ENCODE measurements at regions of chr3 and their contacts with region 1.

Region 1: DNA sequence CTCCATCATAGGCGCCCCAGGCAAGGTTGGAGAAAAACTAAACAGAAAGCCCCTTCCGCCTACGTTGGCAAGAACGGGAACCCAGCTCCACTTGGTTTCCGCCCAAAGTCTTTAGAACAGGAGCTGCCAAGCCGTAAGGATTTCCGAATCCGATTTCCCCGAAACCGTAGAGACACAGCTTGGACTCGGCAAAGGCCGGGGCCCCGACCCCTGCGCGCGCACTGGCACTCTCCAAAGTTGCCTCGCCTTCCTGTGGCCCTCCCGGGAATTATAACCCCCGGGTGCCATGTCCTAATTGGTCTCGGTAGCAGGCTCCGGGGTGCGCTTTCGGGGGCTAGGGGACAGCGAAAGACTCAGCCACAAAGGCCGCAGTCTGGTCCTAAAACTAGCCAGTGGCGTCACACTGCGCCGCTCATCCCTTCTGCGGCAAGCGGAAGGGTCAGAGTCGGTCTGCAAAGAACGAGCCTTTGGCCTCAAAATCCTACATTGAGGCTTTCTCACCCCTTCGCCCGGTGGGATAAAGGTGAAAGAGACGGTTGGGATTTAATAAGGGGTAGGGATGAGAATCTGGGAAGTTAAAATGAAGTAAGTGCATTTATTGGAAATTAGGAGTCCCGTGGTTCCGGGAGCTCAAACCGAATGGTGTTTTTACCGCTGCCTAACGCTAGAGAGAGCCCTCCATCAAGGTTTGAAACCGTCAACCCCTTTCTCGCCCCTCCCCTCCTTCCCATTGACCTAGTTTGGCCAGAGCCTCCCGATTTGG is 6.8 kb downstream of the BCL6 start:
- DNase-seq: peak; percentile 81
- CTCF ChIP-seq: peak; percentile 71

Region 2: DNA sequence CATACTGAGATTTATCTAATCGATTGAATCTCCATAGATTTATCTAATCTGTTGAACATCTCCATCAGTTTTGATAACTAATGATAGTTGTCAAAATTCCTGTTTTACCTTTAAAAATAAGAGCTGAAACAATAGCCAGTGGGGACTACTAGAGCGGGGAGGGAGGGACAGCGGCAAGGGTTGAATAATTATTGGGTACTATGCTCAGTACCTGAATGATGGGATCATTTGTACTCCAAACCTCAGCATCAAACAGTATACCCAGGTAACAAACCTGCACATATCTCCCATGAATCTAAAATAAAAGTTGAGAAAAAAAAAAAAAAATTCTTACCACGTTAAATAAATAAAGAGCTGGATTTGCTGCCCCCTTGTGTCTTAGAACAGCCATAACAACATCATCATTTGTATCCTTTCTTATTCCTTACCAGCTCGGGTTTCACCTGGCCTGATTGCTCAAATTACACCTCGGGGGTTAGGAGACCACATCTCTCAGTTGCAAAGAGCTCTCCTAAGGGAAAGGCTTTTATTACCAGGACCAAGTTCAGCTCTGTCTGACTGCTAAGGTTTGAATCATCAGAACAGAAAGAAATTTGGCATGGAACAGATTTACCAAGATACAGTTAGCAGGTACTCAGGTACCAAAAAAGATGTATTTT is 573.5 kb before region 1 on chr3:
- CTCF ChIA-PET with region 1: no interaction called
- POLR2A ChIA-PET with region 1: no interaction called
- DNase-seq: peak; percentile 51
- CTCF ChIP-seq: peak; percentile 47

Region 3: GRCh38 chr3:187669675-187670504 is 68.6 kb before region 1 on chr3 and contains the start of gene SST:
- CTCF ChIA-PET with region 1: no interaction called
- POLR2A ChIA-PET with region 1: no interaction called
- DNase-seq: no peak
- CTCF ChIP-seq: no peak

Region 4: GRCh38 chr3:187694801-187695200 is 43.7 kb before region 1 on chr3:
- CTCF ChIA-PET with region 1: no interaction called
- POLR2A ChIA-PET with region 1: no interaction called
- DNase-seq: no peak
- CTCF ChIP-seq: no peak

Region 5: DNA sequence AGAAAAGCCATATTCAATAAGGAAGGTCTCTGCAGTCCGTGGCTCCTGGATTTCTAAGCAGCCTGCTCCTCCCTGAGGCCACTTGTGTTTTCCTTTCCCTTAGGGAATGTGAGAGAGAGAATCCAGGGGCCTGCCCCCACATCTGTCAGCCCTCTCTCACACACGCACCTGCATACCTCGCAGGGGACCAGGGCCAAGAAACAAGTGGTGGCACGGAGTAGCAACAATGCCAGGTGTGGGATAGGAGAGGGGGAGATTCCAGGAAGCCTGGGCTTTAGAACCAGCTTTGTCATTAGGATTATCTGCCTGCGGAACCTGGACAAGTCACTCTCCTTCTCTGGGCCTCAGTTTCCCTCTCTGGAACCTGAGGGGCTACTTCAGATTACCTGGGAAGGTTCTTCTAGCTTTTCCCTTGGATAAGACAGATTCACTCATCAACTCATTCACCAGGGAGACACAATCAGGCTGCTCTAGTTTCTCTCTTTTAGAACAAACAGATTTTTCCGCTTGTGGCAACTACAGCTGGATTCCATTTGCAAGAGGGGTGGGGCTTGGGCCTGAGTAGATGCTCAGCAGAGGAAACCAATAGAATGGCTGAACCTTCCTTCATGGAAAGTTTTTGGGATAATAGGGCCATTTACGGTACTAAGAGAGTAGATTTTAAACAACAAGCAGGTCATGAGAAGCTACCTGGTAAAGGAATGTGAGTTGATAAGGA is 12.7 kb before region 1 on chr3:
- CTCF ChIA-PET with region 1: interaction called, 42 read pairs
- POLR2A ChIA-PET with region 1: no interaction called
- DNase-seq: no peak
- CTCF ChIP-seq: no peak

Region 6: DNA sequence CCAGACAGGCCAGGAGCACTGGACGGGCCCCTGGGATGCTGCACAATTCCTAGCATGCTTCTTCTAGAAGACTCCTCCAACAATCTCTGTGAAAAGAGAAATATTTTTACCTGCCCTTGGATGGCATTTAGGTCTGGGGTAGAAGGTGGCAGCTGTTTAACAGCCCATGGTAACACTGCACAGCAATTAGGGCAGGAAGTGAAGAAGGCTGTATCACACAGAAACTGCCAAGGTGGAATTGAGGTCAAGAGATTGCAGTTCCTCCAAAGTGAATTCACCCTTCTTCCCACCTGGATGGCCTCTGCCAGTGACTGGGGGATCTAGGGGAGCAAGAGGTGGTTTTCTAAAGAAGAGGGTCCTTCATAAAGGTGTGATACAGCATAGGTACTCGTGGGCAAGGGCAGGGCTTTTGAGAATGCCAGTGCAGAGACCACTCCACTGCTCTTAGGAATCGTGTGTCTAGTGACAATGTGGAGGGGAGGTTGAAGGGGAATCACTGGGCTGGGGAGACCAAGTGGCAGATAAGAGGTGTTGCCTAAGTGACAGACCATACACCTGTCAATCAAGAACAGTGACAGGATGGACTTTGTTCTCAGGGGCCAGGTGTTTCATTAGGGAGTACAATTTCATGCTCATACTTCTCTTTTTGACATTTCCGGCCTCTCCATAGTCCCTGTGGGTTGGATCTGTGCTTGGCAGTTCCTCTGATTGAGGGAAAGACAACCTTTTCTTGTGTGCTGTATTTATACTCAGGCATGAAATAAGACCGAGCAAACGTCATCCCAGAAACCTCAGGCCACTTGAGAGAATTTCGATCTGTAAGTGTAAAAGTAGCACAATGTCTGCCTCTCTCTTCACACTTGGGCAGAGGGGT is 90.3 kb after region 1 on chr3:
- CTCF ChIA-PET with region 1: interaction called, 10 read pairs
- POLR2A ChIA-PET with region 1: no interaction called
- DNase-seq: peak; percentile 37
- CTCF ChIP-seq: no peak

Region 7: GRCh38 chr3:188082031-188082430 is 343.5 kb after region 1 on chr3:
- CTCF ChIA-PET with region 1: no interaction called
- POLR2A ChIA-PET with region 1: no interaction called
- DNase-seq: no peak
- CTCF ChIP-seq: no peak

Region 8: GRCh38 chr3:188673646-188674186 is 935.2 kb after region 1 on chr3:
- CTCF ChIA-PET with region 1: interaction called, 12 read pairs
- POLR2A ChIA-PET with region 1: no interaction called
- DNase-seq: no peak
- CTCF ChIP-seq: no peak

Region 9: GRCh38 chr3:188954590-188955208 is 1216.2 kb after region 1 on chr3:
- CTCF ChIA-PET with region 1: interaction called, 530 read pairs
- POLR2A ChIA-PET with region 1: interaction called, 3 read pairs
- DNase-seq: peak; percentile 60
- CTCF ChIP-seq: peak; percentile 86

Region 10: GRCh38 chr3:189148081-189148507 is 1409.6 kb after region 1 on chr3:
- CTCF ChIA-PET with region 1: interaction called, 109 read pairs
- POLR2A ChIA-PET with region 1: no interaction called
- DNase-seq: peak; percentile 56
- CTCF ChIP-seq: peak; percentile 82